ENCODE measurements at regions of chr7 and their contacts with region 1.

Region 1: DNA sequence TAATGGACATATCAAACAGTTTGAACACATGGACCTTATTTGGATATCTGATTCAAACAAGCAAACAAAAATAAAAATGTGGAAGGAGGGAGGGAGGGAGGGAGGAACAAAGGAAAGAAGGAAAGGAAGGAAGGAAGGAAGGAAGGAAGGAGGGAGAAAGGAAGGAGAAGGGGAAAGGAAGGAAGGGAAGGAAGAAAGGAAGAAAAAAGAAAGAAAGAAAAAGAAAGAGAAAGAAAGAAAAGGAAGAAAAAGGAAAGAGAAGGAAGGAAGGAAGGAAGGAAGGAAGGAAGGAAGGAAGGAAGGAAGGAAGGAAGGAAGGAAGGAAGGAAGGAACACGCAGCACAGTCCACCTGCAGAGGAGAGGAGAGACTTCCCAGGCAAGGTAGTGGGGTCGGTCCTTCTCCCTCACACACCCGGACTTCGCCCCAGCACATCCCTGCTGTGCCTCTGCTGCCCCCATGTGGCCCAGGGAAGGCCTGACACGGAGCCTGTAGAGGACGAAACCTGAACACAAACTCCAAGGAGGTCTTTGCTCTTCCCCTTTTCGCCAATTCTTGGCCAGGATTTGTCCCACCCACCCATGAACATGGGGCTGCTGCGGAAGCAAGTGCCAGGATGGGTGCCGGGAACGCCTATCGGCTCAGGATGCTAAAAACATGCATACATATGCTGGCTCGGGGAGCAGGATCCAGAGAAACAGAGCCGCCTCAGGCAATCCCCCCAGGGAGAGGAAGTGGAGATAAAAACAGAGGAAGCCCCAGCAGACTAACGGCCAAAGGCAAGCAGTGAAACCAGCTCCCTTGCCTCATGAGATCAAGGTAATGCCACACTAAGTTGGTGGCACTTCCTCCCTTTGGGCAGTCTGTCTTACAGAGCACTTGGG is 52.3 kb upstream of the DGKI start:
- DNase-seq: peak; percentile 55 to 83 (median 69)
- ATAC-seq: peak; percentile 97
- H3K4me3 ChIP-seq: no peak overlapping the region
- H3K4me3 Mint-ChIP-seq: no peak overlapping the region
- H3K27ac ChIP-seq: no peak overlapping the region
- H3K27ac Mint-ChIP-seq: no peak overlapping the region
- H3K4me1 ChIP-seq: peaks cover 14% of the 10 kb centered on the region
- H3K4me1 Mint-ChIP-seq: peaks cover 17% of the 10 kb centered on the region
- H3K27me3 ChIP-seq: no peaks in the 10 kb centered on the region
- H3K27me3 Mint-ChIP-seq: no peaks in the 10 kb centered on the region
- CTCF ChIP-seq: peak; percentile 76

Region 2: DNA sequence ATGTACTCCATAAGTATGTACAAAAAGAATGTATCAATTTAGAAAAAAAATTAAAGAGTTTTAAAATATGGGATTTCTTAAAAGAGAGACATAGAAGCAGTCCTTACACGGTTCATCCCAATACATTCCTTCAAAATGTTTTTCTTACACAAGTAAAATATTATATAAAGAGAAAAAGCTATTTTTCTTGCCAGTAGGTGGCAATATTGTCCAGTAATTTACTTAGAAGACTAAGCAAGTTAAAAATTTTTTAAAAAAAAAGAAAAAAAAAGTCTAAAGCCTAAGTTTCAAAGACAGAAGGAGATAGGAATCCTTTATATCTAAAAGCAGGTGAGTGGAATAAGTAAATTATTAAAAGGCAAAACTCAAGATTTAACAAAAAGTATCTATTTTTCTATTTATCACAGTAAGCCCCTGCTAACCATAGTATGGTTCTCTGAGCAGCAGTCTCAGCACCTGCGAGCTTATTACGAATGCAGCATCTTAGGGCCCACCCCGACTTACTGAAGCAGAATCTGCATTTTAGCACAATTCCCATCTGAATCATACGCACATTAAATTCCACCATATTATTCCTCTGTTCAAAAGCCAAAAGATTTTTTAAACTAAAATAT is 292.9 kb before region 1 on chr7:
- CTCF ChIA-PET with region 1: no interaction called
- POLR2A ChIA-PET with region 1: no interaction called
- intact Hi-C with region 1: loop called (anchors 5 to 10 kb)
- DNase-seq: peak in 3 of 14 experiments; percentile 18 to 23 (median 22)
- ATAC-seq: no peak
- H3K4me3 ChIP-seq: no peak overlapping the region
- H3K4me3 Mint-ChIP-seq: no peak overlapping the region
- H3K27ac ChIP-seq: no peak overlapping the region
- H3K27ac Mint-ChIP-seq: no peak overlapping the region
- H3K4me1 ChIP-seq: no peaks in the 10 kb centered on the region
- H3K4me1 Mint-ChIP-seq: no peaks in the 10 kb centered on the region
- H3K27me3 ChIP-seq: no peaks in the 10 kb centered on the region
- H3K27me3 Mint-ChIP-seq: peaks cover 27% of the 10 kb centered on the region
- CTCF ChIP-seq: peak; percentile 56

Region 3: GRCh38 chr7:138002096-138002827 is 103.2 kb after region 1 on chr7:
- CTCF ChIA-PET with region 1: interaction called, 65 read pairs
- POLR2A ChIA-PET with region 1: interaction called, 6 read pairs
- intact Hi-C with region 1: no loop called
- DNase-seq: peak; percentile 95 to 100 (median 97)
- ATAC-seq: peak; percentile 87
- H3K4me3 ChIP-seq: peak overlapping the region; percentile 92
- H3K4me3 Mint-ChIP-seq: peak overlapping the region; percentile 93
- H3K27ac ChIP-seq: peak overlapping the region; percentile 67 to 75
- H3K27ac Mint-ChIP-seq: peak overlapping the region; percentile 75
- H3K4me1 ChIP-seq: peaks cover 16% of the 10 kb centered on the region
- H3K4me1 Mint-ChIP-seq: peaks cover 36% of the 10 kb centered on the region
- H3K27me3 ChIP-seq: no peaks in the 10 kb centered on the region
- H3K27me3 Mint-ChIP-seq: no peaks in the 10 kb centered on the region
- CTCF ChIP-seq: peak; percentile 99

Region 4: GRCh38 chr7:138151731-138152577 is 252.9 kb after region 1 on chr7:
- CTCF ChIA-PET with region 1: no interaction called
- POLR2A ChIA-PET with region 1: no interaction called
- intact Hi-C with region 1: loop called in 1 of 2 experiments (anchors 10 kb)
- DNase-seq: no peak
- ATAC-seq: no peak
- H3K4me3 ChIP-seq: no peak overlapping the region
- H3K4me3 Mint-ChIP-seq: no peak overlapping the region
- H3K27ac ChIP-seq: no peak overlapping the region
- H3K27ac Mint-ChIP-seq: no peak overlapping the region
- H3K4me1 ChIP-seq: peaks cover 4% of the 10 kb centered on the region
- H3K4me1 Mint-ChIP-seq: peaks cover 7% of the 10 kb centered on the region
- H3K27me3 ChIP-seq: no peaks in the 10 kb centered on the region
- H3K27me3 Mint-ChIP-seq: peaks cover 13% of the 10 kb centered on the region
- CTCF ChIP-seq: no peak

Region 5: DNA sequence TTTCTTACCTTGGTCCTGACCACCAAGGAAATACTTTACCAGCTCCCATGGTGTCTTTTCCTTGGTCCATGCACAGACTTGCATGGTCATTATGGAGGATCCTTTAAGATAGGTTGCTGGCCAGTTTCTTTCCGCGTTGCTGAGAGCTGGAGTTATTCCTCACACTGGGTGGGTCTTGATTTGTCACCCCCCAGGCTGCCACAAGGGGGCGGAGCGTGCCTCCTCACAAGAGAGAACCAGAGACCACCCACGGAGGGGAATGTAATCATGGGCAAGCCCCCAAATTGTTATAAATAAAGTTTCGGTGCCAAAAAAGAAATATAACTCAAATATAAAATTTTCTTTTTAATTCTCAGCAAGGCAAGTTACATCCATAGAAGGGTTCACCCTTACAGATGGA is 550.5 kb after region 1 on chr7:
- CTCF ChIA-PET with region 1: no interaction called
- POLR2A ChIA-PET with region 1: no interaction called
- intact Hi-C with region 1: loop called in 1 of 2 experiments (anchors 10 kb)
- DNase-seq: peak in 13 of 14 experiments; percentile 15 to 59 (median 35)
- ATAC-seq: no peak
- H3K4me3 ChIP-seq: no peak overlapping the region
- H3K4me3 Mint-ChIP-seq: no peak overlapping the region
- H3K27ac ChIP-seq: no peak overlapping the region
- H3K27ac Mint-ChIP-seq: no peak overlapping the region
- H3K4me1 ChIP-seq: no peaks in the 10 kb centered on the region
- H3K4me1 Mint-ChIP-seq: no peaks in the 10 kb centered on the region
- H3K27me3 ChIP-seq: no peaks in the 10 kb centered on the region
- H3K27me3 Mint-ChIP-seq: no peaks in the 10 kb centered on the region
- CTCF ChIP-seq: peak; percentile 61

Region 6: GRCh38 chr7:138865843-138866242 is 966.8 kb after region 1 on chr7:
- CTCF ChIA-PET with region 1: no interaction called
- POLR2A ChIA-PET with region 1: no interaction called
- intact Hi-C with region 1: loop called in 1 of 2 experiments (anchors 5 kb)
- DNase-seq: peak; percentile 11 to 69 (median 41)
- ATAC-seq: peak; percentile 93
- H3K4me3 ChIP-seq: no peak overlapping the region
- H3K4me3 Mint-ChIP-seq: no peak overlapping the region
- H3K27ac ChIP-seq: no peak overlapping the region
- H3K27ac Mint-ChIP-seq: no peak overlapping the region
- H3K4me1 ChIP-seq: no peaks in the 10 kb centered on the region
- H3K4me1 Mint-ChIP-seq: no peaks in the 10 kb centered on the region
- H3K27me3 ChIP-seq: no peaks in the 10 kb centered on the region
- H3K27me3 Mint-ChIP-seq: peaks cover 4% of the 10 kb centered on the region
- CTCF ChIP-seq: peak; percentile 51

Measured in CD4-positive, alpha-beta T cell (primary cell).